ENCODE measurements at regions of chr1 and their contacts with region 1.

Region 1: GRCh38 chr1:225474986-225475820 is 47.4 kb upstream of the LBR start:
- DNase-seq: peak; percentile 48
- H3K4me3 ChIP-seq: peak overlapping the region in 1 of 3 experiments; percentile 28
- H3K27ac ChIP-seq: no peak overlapping the region
- H3K4me1 ChIP-seq: peaks cover 5% of the 10 kb centered on the region
- H3K27me3 ChIP-seq: no peaks in the 10 kb centered on the region
- CTCF ChIP-seq: peak; percentile 99 to 100

Region 2: DNA sequence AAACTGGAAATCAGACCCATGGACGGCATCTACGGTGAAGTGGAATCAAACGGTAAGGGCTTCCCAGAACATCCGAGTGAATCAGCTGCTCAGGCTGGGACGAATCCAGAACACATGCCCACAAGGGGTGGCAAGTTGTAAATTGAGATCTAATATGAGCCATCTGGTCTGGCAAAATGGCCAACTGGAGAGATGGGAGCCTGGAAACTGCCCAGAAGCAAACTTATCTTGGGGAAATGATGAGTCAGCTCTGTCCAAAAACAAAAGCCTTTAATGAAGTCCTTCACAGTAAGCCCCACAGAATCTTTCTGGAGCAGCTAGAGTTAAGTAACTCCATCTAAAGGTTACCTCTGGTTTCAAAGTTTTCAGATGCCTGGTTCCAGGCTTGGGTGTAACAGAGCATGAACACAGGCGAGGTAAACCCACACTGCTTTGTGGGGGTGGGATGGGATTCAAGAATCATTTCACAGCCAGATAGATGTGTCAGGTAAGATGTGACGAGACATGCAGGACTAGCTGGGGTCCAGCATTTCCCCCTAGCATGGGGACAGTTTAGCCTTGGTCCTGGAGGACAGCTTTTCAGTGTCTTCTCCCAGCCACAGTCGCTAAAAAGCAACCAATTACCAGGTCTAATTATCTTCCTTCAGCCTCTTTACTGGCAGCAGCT is 291.9 kb after region 1 on chr1:
- CTCF ChIA-PET with region 1: no interaction called
- dilution Hi-C with region 1: no loop called
- in situ Hi-C with region 1: loop called in 1 of 2 experiments (anchors 10 kb)
- intact Hi-C with region 1: loop called (anchors 1 kb)
- DNase-seq: peak; percentile 82
- H3K4me3 ChIP-seq: no peak overlapping the region
- H3K27ac ChIP-seq: peak overlapping the region; percentile 31
- H3K4me1 ChIP-seq: peaks cover 36% of the 10 kb centered on the region
- H3K27me3 ChIP-seq: no peaks in the 10 kb centered on the region
- CTCF ChIP-seq: no peak

Region 3: DNA sequence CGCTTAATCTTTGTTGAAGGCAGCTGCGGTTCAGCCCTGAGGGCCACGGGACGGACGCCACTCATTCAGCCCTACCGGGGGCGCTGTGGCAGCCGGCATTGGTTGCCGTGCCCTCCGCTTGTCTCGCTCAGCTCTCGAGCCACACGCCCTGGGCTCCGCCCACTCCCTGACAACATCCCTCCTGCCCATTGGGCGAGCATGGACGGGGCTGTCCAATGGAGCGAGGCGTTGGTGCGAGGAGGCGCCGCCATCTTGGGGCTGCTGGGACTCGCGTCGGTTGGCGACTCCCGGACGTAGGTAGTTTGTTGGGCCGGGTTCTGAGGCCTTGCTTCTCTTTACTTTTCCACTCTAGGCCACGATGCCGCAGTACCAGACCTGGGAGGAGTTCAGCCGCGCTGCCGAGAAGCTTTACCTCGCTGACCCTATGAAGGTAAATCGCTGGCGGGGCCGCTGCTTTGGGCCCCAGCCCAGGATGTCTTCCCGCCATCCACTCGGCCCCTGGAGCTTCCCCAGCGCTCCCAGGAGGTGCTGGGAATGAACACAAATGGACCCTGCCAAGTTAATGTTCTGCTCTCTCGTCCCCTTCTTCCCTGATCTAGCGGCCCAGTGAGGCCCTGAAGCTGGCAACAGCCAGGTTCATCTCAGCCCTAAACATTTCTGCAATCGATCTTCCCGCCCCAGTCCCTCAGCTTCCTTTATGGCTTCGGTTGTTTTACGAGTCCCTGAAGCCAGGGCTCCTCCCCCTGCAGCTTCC is 302.6 kb after region 1 on chr1 and contains the start of gene SRP9:
- CTCF ChIA-PET with region 1: no interaction called
- dilution Hi-C with region 1: no loop called
- in situ Hi-C with region 1: loop called in 1 of 2 experiments (anchors 5 kb)
- intact Hi-C with region 1: loop called (anchors 1 kb)
- DNase-seq: peak; percentile 99
- H3K4me3 ChIP-seq: peak within 1 kb of the TSS; percentile 74 to 99 (median 77)
- H3K27ac ChIP-seq: peak within 1 kb of the TSS; percentile 92
- H3K4me1 ChIP-seq: peaks cover 25% of the 10 kb centered on the region
- H3K27me3 ChIP-seq: no peaks in the 10 kb centered on the region
- CTCF ChIP-seq: peak; percentile 78 to 94
- total RNA-seq, gene SRP9: 164 to 214 TPM

Region 4: GRCh38 chr1:225977937-225978748 is 502.9 kb after region 1 on chr1:
- CTCF ChIA-PET with region 1: interaction called, 3 read pairs
- dilution Hi-C with region 1: loop called (anchors 25 kb)
- in situ Hi-C with region 1: loop called (anchors 5 kb)
- intact Hi-C with region 1: loop called (anchors 1 kb)
- DNase-seq: no peak
- H3K4me3 ChIP-seq: no peak overlapping the region
- H3K27ac ChIP-seq: no peak overlapping the region
- H3K4me1 ChIP-seq: no peaks in the 10 kb centered on the region
- H3K27me3 ChIP-seq: no peaks in the 10 kb centered on the region
- CTCF ChIP-seq: no peak

Region 5: GRCh38 chr1:225999227-225999911 is 524.2 kb after region 1 on chr1 and contains the start of gene SDE2:
- CTCF ChIA-PET with region 1: no interaction called
- dilution Hi-C with region 1: loop called (anchors 25 kb)
- in situ Hi-C with region 1: no loop called
- intact Hi-C with region 1: no loop called
- DNase-seq: peak; percentile 98
- H3K4me3 ChIP-seq: peak within 1 kb of the TSS; percentile 89 to 94 (median 93)
- H3K27ac ChIP-seq: peak within 1 kb of the TSS; percentile 94
- H3K4me1 ChIP-seq: peaks cover 29% of the 10 kb centered on the region
- H3K27me3 ChIP-seq: no peaks in the 10 kb centered on the region
- CTCF ChIP-seq: no peak
- total RNA-seq, gene SDE2: 22.0 to 23.5 TPM

Region 6: GRCh38 chr1:226121587-226122400 is 646.6 kb after region 1 on chr1:
- CTCF ChIA-PET with region 1: no interaction called
- dilution Hi-C with region 1: no loop called
- in situ Hi-C with region 1: no loop called
- intact Hi-C with region 1: loop called (anchors 1 kb)
- DNase-seq: peak; percentile 37
- H3K4me3 ChIP-seq: peak overlapping the region; percentile 58 to 74 (median 66)
- H3K27ac ChIP-seq: peak overlapping the region; percentile 49
- H3K4me1 ChIP-seq: peaks cover 32% of the 10 kb centered on the region
- H3K27me3 ChIP-seq: no peaks in the 10 kb centered on the region
- CTCF ChIP-seq: peak; percentile 45 to 61

Measured in mammary epithelial cell (primary cell).